GM18951 (cell line): ENCODE measurements at regions of chr14 and their contacts with region 1.

Region 1: DNA sequence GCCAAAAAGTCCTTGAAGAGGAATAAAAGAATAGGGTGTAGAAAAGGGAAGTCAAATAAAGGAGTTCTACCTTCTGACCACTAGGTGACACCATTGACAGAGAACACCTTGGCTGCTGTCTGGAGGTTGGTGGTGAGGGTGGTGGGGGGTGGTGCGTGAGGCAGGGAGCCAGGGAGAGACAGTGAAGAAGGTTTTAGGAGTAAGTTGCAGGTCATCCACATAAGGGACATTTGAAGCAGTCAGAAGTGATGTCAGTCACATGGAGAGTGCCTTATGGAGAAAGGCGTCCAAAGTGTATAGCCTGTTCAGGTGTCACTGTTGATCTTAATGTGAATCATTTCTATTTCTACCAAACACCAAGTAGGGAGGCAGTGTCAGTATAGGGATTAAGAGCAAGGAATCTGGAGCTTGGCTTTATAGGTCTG is 279.3 kb upstream of the DDHD1 start:
- POLR2A ChIP-seq: no peak

Region 2: DNA sequence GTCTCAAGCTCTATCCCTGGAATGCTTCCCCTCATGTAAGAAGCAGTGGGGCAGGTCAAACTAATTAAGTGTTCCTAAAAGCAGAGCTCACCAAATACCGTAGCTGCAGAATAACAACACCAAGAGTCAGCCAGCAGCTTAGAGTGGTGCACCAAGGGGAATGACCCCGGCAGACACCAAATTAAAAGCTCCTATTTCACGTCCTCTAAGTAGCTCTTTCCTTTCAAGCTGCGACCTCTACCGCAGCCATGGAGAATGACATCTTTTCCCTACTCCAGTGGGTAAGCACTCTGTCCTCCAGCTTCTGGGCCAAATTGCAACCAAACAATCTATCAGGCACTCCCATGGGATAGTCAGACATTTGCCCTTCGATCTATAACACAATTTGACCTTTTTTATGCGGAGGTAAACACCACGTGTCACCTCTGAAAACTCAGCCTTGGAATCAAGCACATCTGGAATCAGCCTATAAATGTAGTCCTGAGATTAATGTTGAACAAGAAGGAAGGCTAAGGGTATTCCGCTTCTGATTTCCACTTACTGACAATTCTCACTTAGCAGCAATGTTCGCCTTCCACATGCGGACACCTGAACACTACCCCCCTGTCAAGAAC is 896.8 kb after region 1 on chr14:
- in situ Hi-C with region 1: loop called (anchors 25 kb)
- POLR2A ChIP-seq: no peak